ENCODE measurements at regions of chr19 and their contacts with region 1.

Region 1: DNA sequence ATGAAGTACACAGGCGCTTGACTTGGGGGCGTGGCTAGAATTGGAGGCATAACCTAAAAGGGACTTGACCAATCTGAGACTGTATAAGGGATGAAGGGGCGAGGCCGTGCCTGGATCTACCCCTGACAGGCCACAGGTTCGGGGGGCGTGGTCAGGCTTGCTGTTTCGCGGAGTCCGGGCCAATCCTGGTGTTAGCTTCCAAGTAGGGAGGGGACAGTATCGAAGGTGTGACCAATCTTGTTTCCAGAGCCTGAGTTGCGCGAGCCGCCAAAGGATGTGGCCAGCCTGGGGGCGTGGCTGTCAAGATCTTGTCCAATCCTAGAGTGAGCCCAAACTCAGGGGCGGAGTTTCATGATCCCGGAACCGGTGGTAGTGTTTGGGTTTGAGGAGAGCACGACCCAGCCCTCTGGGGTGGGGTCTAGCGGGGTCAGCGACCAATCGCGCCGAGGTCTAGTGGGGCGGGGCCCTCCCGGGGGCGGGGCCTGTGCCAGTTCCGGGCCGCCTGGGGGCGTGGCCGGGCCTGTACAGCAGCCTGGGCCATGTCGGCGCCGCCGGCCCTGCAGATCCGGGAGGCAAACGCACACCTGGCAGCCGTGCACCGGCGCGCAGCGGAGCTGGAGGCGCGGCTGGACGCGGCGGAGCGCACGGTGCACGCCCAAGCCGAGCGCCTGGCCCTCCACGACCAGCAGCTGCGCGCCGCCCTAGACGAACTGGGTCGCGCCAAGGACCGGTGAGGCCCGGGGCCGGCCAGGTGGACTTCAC is at the start of gene VMAC:
- DNase-seq: peak in 8 of 9 donors; percentile 99 to 100 (median 100)
- ATAC-seq: peak; percentile 85
- H3K4me3 ChIP-seq: peak within 1 kb of the TSS; percentile 89
- H3K4me3 Mint-ChIP-seq: peak within 1 kb of the TSS; percentile 89 to 99 (median 96)
- H3K27ac ChIP-seq: peak within 1 kb of the TSS; percentile 93
- H3K27ac Mint-ChIP-seq: peak within 1 kb of the TSS; percentile 96 to 100 (median 100)
- H3K4me1 ChIP-seq: peaks cover 18 to 19% of the 10 kb centered on the region in 2 donors
- H3K4me1 Mint-ChIP-seq: peaks cover 21 to 53% (median 30%) of the 10 kb centered on the region in 7 donors
- H3K27me3 ChIP-seq: no peaks in the 10 kb centered on the region
- H3K27me3 Mint-ChIP-seq: no peaks in the 10 kb centered on the region
- total RNA-seq, gene VMAC: 13.1 to 39.4 (median 27.8) TPM

Region 2: DNA sequence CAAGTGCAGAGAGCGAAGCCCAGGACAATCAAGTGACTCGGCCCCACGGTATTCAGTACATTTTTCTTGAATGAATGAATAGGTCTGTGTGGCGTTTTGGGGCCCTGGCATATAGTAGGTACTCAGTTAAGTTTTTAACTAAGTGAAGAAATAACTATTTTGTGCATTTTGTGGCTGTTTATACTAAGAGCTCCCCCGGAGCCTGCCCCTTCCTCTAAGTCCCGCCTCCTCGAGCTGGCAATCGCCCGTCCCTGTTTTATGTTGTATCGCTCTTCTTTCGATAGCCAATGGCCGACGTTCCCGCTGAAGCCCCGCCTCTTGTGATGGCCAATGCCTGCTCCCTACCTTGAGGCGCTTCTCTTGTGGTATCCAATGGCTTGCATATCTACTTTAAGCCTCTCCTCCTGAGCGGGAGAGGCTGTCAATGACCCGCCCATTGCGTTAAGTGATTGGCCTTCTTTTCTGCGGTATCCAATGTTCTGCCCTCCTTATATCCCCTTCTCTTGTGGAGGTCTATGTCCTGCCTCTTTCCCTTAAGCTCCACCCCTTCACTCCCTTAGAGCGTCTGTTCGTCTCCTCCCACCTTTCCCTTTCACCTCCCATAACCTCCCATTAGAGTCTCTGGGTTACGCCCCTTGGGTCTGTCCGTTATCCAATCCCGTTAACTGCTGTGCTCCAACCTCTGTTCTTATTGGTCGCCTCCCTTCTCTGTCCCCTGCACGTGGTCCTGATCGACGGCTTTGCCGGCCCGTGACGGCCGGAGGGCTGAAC is 1432.9 kb before region 1 on chr19:
- CTCF ChIA-PET with region 1: no interaction called
- POLR2A ChIA-PET with region 1: no interaction called
- intact Hi-C with region 1: loop called in 1 of 2 experiments (anchors 5 kb)
- DNase-seq: peak; percentile 78 to 100 (median 98)
- ATAC-seq: peak; percentile 90
- H3K4me3 ChIP-seq: peak overlapping the region; percentile 71
- H3K4me3 Mint-ChIP-seq: no peak overlapping the region
- H3K27ac ChIP-seq: peak overlapping the region; percentile 77
- H3K27ac Mint-ChIP-seq: no peak overlapping the region
- H3K4me1 ChIP-seq: peaks cover 7 to 12% of the 10 kb centered on the region in 2 donors
- H3K4me1 Mint-ChIP-seq: peaks cover 11 to 25% (median 24%) of the 10 kb centered on the region in 7 donors
- H3K27me3 ChIP-seq: no peaks in the 10 kb centered on the region
- H3K27me3 Mint-ChIP-seq: no peaks in the 10 kb centered on the region

Region 3: GRCh38 chr19:5631568-5632240 is 272.8 kb before region 1 on chr19:
- CTCF ChIA-PET with region 1: no interaction called
- POLR2A ChIA-PET with region 1: no interaction called
- intact Hi-C with region 1: no loop called
- DNase-seq: no peak
- ATAC-seq: no peak
- H3K4me3 ChIP-seq: no peak overlapping the region
- H3K4me3 Mint-ChIP-seq: peak overlapping the region in 7 of 10 donors; percentile 15 to 66 (median 61)
- H3K27ac ChIP-seq: no peak overlapping the region
- H3K27ac Mint-ChIP-seq: peak overlapping the region in 6 of 9 donors; percentile 3 to 52 (median 32)
- H3K4me1 ChIP-seq: peaks cover 34 to 41% of the 10 kb centered on the region in 2 donors
- H3K4me1 Mint-ChIP-seq: peaks cover 52 to 93% (median 79%) of the 10 kb centered on the region in 7 donors
- H3K27me3 ChIP-seq: no peaks in the 10 kb centered on the region
- H3K27me3 Mint-ChIP-seq: no peaks in the 10 kb centered on the region

Region 4: DNA sequence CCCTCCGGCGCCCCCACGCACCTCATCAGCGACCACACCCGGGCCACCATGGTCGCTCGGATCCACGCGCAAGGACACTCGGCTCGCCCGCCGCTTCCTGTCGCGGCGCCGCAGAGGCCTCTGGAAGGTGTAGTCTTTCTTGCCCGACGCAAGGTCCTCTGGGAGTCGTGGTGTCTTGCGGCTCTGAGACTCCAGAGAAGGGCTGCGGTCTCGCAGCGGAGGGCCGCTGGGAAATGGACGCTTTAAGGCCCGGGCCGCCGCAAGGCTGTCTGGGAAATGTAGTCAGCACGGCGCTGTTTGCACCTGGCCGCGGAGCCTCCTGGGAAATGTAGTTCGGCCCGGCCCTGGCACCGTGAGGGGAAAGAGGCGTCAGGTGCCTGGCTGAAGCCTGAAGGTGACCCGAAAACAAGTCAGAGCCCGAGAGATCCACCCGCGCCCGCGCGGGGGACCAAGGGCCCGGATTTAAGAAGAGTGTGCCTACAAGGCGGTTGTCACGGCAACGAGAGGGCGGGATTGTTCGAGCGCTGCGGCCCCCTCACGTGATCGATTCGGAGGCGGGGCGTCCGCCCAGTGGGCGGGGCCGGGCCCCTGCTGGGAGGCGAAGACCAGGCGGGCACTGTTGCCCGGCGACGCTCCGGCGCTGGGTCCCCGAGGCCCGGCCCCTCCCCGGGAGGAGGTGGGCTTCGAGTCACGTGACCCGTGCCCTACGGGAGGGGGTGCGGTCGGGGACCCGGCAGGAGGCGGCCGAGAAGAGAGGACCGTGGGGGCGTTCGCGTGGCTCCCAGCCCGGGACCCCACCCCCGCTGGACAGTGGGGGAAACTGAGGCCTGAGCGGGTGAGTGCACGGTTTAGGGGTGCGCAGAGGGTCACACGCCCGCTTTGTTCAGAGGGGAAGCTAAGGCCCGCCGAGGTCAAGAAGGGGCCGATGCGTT is 223.8 kb before region 1 on chr19 and contains the starts of genes HSD11B1L and MICOS13:
- CTCF ChIA-PET with region 1: no interaction called
- POLR2A ChIA-PET with region 1: no interaction called
- intact Hi-C with region 1: loop called (anchors 1 kb)
- DNase-seq: peak; percentile 98 to 99 (median 99)
- ATAC-seq: peak; percentile 96
- H3K4me3 ChIP-seq: peak within 1 kb of the TSS; percentile 100
- H3K4me3 Mint-ChIP-seq: peak within 1 kb of the TSS; percentile 85 to 97 (median 94)
- H3K27ac ChIP-seq: peak within 1 kb of the TSS; percentile 98
- H3K27ac Mint-ChIP-seq: peak within 1 kb of the TSS; percentile 94 to 100 (median 97)
- H3K4me1 ChIP-seq: peaks cover 8 to 18% of the 10 kb centered on the region in 2 donors
- H3K4me1 Mint-ChIP-seq: peaks cover 20 to 33% (median 25%) of the 10 kb centered on the region in 7 donors
- H3K27me3 ChIP-seq: no peaks in the 10 kb centered on the region
- H3K27me3 Mint-ChIP-seq: peaks cover 0 to 18% (median 0%) of the 10 kb centered on the region in 5 donors
- total RNA-seq, gene HSD11B1L: 2.8 to 5.2 (median 3.6) TPM
- total RNA-seq, gene MICOS13: 26.1 to 49.3 (median 38.4) TPM

Region 5: GRCh38 chr19:5803752-5804515 is 100.6 kb before region 1 on chr19:
- CTCF ChIA-PET with region 1: interaction called, 8 read pairs
- POLR2A ChIA-PET with region 1: interaction called, 6 read pairs
- intact Hi-C with region 1: loop called (anchors 1 kb)
- DNase-seq: peak; percentile 89 to 99 (median 93)
- ATAC-seq: peak; percentile 98
- H3K4me3 ChIP-seq: peak overlapping the region; percentile 64
- H3K4me3 Mint-ChIP-seq: peak overlapping the region; percentile 62 to 87 (median 80)
- H3K27ac ChIP-seq: peak overlapping the region; percentile 44
- H3K27ac Mint-ChIP-seq: peak overlapping the region in 8 of 9 donors; percentile 28 to 83 (median 72)
- H3K4me1 ChIP-seq: peaks cover 13 to 20% of the 10 kb centered on the region in 2 donors
- H3K4me1 Mint-ChIP-seq: peaks cover 7 to 24% (median 21%) of the 10 kb centered on the region in 7 donors
- H3K27me3 ChIP-seq: peaks cover 0 to 2% of the 10 kb centered on the region in 2 donors
- H3K27me3 Mint-ChIP-seq: peaks cover 12 to 45% (median 18%) of the 10 kb centered on the region in 5 donors

Region 6: GRCh38 chr19:5961969-5962945 is 57.7 kb after region 1 on chr19:
- CTCF ChIA-PET with region 1: interaction called, 4 read pairs
- POLR2A ChIA-PET with region 1: interaction called, 48 read pairs
- intact Hi-C with region 1: loop called (anchors 1 kb)
- DNase-seq: peak; percentile 42 to 92 (median 88)
- ATAC-seq: peak; percentile 96
- H3K4me3 ChIP-seq: peak overlapping the region; percentile 38
- H3K4me3 Mint-ChIP-seq: peak overlapping the region; percentile 79 to 89 (median 84)
- H3K27ac ChIP-seq: peak overlapping the region; percentile 77
- H3K27ac Mint-ChIP-seq: peak overlapping the region; percentile 95 to 100 (median 99)
- H3K4me1 ChIP-seq: peaks cover 56 to 84% of the 10 kb centered on the region in 2 donors
- H3K4me1 Mint-ChIP-seq: peaks cover 69 to 99% (median 89%) of the 10 kb centered on the region in 7 donors
- H3K27me3 ChIP-seq: no peaks in the 10 kb centered on the region
- H3K27me3 Mint-ChIP-seq: no peaks in the 10 kb centered on the region

Region 7: DNA sequence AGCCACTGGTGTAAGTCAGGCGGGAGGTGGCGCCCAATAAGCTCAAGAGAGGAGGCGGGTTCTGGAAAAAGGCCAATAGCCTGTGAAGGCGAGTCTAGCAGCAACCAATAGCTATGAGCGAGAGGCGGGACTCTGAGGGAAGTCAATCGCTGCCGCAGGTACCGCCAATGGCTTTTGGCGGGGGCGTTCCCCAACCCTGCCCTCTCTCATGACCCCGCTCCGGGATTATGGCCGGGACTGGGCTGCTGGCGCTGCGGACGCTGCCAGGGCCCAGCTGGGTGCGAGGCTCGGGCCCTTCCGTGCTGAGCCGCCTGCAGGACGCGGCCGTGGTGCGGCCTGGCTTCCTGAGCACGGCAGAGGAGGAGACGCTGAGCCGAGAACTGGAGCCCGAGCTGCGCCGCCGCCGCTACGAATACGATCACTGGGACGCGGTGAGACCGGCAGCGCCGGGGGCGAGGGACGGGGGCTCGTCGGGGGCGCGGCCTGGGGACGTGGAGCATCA is 468.1 kb after region 1 on chr19 and contains the start of gene ALKBH7:
- CTCF ChIA-PET with region 1: no interaction called
- POLR2A ChIA-PET with region 1: no interaction called
- intact Hi-C with region 1: loop called in 1 of 2 experiments (anchors 1 kb)
- DNase-seq: peak; percentile 82 to 99 (median 98)
- ATAC-seq: peak; percentile 83
- H3K4me3 ChIP-seq: peak within 1 kb of the TSS; percentile 89
- H3K4me3 Mint-ChIP-seq: peak within 1 kb of the TSS; percentile 82 to 92 (median 88)
- H3K27ac ChIP-seq: peak within 1 kb of the TSS; percentile 88
- H3K27ac Mint-ChIP-seq: peak within 1 kb of the TSS; percentile 66 to 95 (median 92)
- H3K4me1 ChIP-seq: peaks cover 5 to 10% of the 10 kb centered on the region in 2 donors
- H3K4me1 Mint-ChIP-seq: peaks cover 9 to 23% (median 13%) of the 10 kb centered on the region in 7 donors
- H3K27me3 ChIP-seq: no peaks in the 10 kb centered on the region
- H3K27me3 Mint-ChIP-seq: no peaks in the 10 kb centered on the region
- total RNA-seq, gene ALKBH7: 33.6 to 90.1 (median 72.9) TPM

Region 8: DNA sequence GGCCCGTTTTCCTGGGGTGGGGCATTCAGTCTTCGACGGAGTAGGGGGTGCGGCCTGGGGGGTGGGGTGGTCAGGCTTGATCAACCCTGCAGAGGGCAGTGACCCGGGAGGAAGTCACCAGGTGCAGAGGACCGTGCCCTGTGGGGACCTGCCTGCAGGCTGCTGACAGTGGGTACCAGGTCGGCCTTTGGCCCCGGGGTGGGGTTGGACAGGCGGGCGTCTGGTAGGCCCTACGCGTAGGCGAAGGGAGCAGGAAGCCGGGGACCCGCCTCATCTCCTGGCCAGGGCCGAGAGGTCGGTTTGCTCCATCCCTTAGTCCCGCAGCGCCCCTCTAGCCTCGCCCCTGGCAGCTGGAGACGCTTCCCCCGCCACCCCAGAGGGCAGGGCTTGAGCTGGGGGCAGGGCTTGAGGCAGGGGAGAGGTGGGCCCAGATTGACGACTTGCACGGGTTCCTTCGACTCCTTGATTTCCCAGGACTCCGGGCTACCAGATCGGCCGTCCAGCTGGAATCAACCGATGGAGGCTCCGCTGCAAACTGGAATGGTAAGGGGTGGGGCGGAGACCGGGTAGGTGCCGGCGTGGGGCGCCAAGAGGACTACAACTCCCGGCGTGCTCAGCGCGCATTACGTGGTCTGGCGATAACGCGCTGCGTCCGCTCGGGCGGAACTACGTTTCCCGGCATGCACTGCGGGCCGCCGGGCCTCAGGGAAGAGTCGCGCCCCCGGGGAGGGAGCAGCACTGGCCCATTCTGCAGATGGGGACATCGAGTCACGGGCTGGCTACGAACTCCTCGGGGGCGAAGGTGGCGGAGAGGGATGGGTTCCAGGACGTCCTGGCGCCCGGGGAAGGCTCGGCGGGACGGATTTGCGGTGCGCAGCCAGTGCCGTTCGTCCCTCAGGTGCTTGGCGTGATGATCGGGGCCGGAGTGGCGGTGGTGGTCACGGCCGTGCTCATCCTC is 1630.8 kb after region 1 on chr19 and contains the start of gene PNPLA6:
- CTCF ChIA-PET with region 1: no interaction called
- POLR2A ChIA-PET with region 1: no interaction called
- intact Hi-C with region 1: loop called in 1 of 2 experiments (anchors 2 kb)
- DNase-seq: peak; percentile 85 to 95 (median 91)
- ATAC-seq: peak; percentile 91
- H3K4me3 ChIP-seq: peak within 1 kb of the TSS; percentile 99
- H3K4me3 Mint-ChIP-seq: peak within 1 kb of the TSS; percentile 93 to 97 (median 94)
- H3K27ac ChIP-seq: peak within 1 kb of the TSS; percentile 81
- H3K27ac Mint-ChIP-seq: peak within 1 kb of the TSS; percentile 81 to 96 (median 92)
- H3K4me1 ChIP-seq: peaks cover 10 to 17% of the 10 kb centered on the region in 2 donors
- H3K4me1 Mint-ChIP-seq: peaks cover 6 to 26% (median 22%) of the 10 kb centered on the region in 7 donors
- H3K27me3 ChIP-seq: no peaks in the 10 kb centered on the region
- H3K27me3 Mint-ChIP-seq: no peaks in the 10 kb centered on the region
- total RNA-seq, gene PNPLA6: 82.0 to 157 (median 133) TPM